Transverse colon (tissue), 4 donors: ENCODE measurements at regions of chr12 and their contacts with region 1.

Region 1: DNA sequence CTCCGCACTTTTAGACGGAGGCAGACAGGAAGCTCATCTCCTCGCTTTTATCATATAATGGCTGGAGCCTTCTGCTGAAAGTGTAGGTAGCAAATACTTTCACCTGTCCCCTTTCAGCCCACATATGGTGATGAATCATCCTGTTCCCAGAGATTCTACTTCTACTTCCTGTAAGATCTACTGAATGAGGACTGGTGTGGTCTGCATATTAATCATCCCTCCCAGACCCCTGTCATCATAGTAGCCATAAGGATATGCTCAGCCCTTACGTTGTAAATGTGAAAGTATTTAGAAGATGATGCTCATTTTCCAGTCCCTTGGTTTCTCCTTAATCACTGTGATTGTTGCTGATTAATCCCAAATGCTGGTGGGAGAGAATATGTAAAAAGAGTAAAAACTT is 268.2 kb upstream of the GRIP1 start:
- DNase-seq: no peak
- H3K4me3 ChIP-seq: no peak overlapping the region
- H3K27ac ChIP-seq: no peak overlapping the region
- H3K4me1 ChIP-seq: peaks cover 0 to 5% (median 2%) of the 10 kb centered on the region in 4 donors
- H3K27me3 ChIP-seq: no peaks in the 10 kb centered on the region
- CTCF ChIP-seq: no peak
- EP300 ChIP-seq: no peak
- POLR2A ChIP-seq: no peak

Region 2: DNA sequence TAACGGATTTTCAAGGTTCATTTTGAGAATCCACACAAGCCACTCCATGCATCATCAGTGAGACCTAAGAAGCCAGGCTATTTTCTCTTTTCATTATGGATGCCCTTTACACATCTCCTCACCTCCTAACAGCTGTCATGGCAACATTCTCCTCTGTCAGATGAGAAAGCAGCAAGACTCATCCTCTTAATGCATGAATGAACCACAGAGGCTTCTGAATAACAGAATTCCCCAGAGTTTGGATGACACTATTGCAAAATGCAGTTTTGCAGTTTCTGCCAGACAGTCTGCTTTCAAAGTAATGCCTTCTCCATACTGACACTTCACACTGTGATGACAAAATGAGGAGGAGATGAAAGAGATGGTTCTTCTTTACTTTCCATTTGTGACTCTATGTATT is 18.5 kb after region 1 on chr12:
- in situ Hi-C with region 1: no loop called
- intact Hi-C with region 1: loop called (anchors 1 kb)
- DNase-seq: no peak
- H3K4me3 ChIP-seq: no peak overlapping the region
- H3K27ac ChIP-seq: no peak overlapping the region
- H3K4me1 ChIP-seq: peaks cover 0 to 13% (median 0%) of the 10 kb centered on the region in 4 donors
- H3K27me3 ChIP-seq: no peaks in the 10 kb centered on the region
- CTCF ChIP-seq: no peak
- EP300 ChIP-seq: no peak
- POLR2A ChIP-seq: no peak

Region 3: DNA sequence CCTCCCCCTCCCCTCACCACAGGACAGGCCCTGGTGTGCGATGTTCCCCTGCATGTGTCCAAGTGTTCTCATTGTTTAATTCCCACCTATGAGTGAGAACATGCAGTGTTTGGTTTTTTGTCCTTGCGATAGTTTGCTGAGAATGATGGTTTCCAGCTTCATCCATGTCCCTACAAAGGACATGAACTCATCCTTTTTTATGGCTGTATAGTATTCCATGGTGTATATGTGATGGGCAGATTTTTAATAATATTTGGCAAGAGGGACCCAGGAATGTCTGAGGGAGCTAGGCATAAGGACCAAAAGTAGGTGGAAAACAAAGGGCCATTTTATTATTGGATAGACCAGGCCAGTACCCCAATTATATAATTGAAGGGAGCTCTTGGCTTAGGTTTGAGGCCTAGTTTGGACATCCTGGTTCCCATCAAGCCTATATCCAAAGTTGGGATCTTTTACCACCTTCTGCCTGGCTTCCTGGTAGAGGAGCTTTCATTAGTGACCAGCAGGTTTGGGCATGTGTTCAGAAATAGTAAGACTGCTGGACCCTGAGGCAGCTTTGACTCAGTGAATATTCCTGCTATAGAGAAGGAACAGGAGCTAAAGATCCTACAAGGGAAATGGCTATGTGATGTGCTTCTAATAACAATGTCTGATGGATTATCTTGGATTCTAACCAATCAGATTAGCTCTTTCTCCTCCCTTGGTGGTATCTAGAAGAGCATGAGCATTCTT is 398.0 kb after region 1 on chr12:
- in situ Hi-C with region 1: no loop called
- intact Hi-C with region 1: no loop called
- DNase-seq: no peak
- H3K4me3 ChIP-seq: no peak overlapping the region
- H3K27ac ChIP-seq: no peak overlapping the region
- H3K4me1 ChIP-seq: no peaks in the 10 kb centered on the region
- H3K27me3 ChIP-seq: no peaks in the 10 kb centered on the region
- CTCF ChIP-seq: no peak
- EP300 ChIP-seq: no peak
- POLR2A ChIP-seq: no peak